ENCODE measurements at regions of chr5 and their contacts with region 1.

Region 1: GRCh38 chr5:40578501-40579451 is 100.9 kb upstream of the PTGER4 start:
- DNase-seq: peak; percentile 87
- H3K4me3 Mint-ChIP-seq: peak overlapping the region; percentile 66
- H3K27ac Mint-ChIP-seq: peak overlapping the region; percentile 92
- H3K4me1 Mint-ChIP-seq: peaks cover 37% of the 10 kb centered on the region
- H3K27me3 Mint-ChIP-seq: no peaks in the 10 kb centered on the region

Region 2: GRCh38 chr5:40333459-40334244 is 245.1 kb before region 1 on chr5:
- CTCF ChIA-PET with region 1: no interaction called
- intact Hi-C with region 1: loop called (anchors 1 kb)
- DNase-seq: peak; percentile 63
- H3K4me3 Mint-ChIP-seq: no peak overlapping the region
- H3K27ac Mint-ChIP-seq: peak overlapping the region; percentile 41
- H3K4me1 Mint-ChIP-seq: peaks cover 15% of the 10 kb centered on the region
- H3K27me3 Mint-ChIP-seq: peaks cover 3% of the 10 kb centered on the region

Region 3: GRCh38 chr5:40437452-40437861 is 141.3 kb before region 1 on chr5:
- CTCF ChIA-PET with region 1: no interaction called
- intact Hi-C with region 1: loop called (anchors 1 kb)
- DNase-seq: peak; percentile 19
- H3K4me3 Mint-ChIP-seq: no peak overlapping the region
- H3K27ac Mint-ChIP-seq: peak overlapping the region; percentile 94
- H3K4me1 Mint-ChIP-seq: peaks cover 81% of the 10 kb centered on the region
- H3K27me3 Mint-ChIP-seq: no peaks in the 10 kb centered on the region

Region 4: GRCh38 chr5:40557501-40557900 is 21.3 kb before region 1 on chr5:
- CTCF ChIA-PET with region 1: interaction called, 3 read pairs
- intact Hi-C with region 1: loop called (anchors 1 kb)
- DNase-seq: no peak
- H3K4me3 Mint-ChIP-seq: no peak overlapping the region
- H3K27ac Mint-ChIP-seq: no peak overlapping the region
- H3K4me1 Mint-ChIP-seq: peaks cover 37% of the 10 kb centered on the region
- H3K27me3 Mint-ChIP-seq: no peaks in the 10 kb centered on the region

Region 5: GRCh38 chr5:40653221-40654022 is 74.6 kb after region 1 on chr5:
- CTCF ChIA-PET with region 1: no interaction called
- intact Hi-C with region 1: loop called (anchors 1 kb)
- DNase-seq: peak; percentile 22
- H3K4me3 Mint-ChIP-seq: peak overlapping the region; percentile 54
- H3K27ac Mint-ChIP-seq: peak overlapping the region; percentile 67
- H3K4me1 Mint-ChIP-seq: peaks cover 57% of the 10 kb centered on the region
- H3K27me3 Mint-ChIP-seq: no peaks in the 10 kb centered on the region

Region 6: GRCh38 chr5:40736103-40736875 is 157.5 kb after region 1 on chr5:
- CTCF ChIA-PET with region 1: no interaction called
- intact Hi-C with region 1: loop called (anchors 1 kb)
- DNase-seq: no peak
- H3K4me3 Mint-ChIP-seq: no peak overlapping the region
- H3K27ac Mint-ChIP-seq: no peak overlapping the region
- H3K4me1 Mint-ChIP-seq: peaks cover 26% of the 10 kb centered on the region
- H3K27me3 Mint-ChIP-seq: no peaks in the 10 kb centered on the region

Region 7: GRCh38 chr5:40781843-40782409 is 203.2 kb after region 1 on chr5:
- CTCF ChIA-PET with region 1: no interaction called
- intact Hi-C with region 1: no loop called
- DNase-seq: no peak
- H3K4me3 Mint-ChIP-seq: no peak overlapping the region
- H3K27ac Mint-ChIP-seq: no peak overlapping the region
- H3K4me1 Mint-ChIP-seq: peaks cover 36% of the 10 kb centered on the region
- H3K27me3 Mint-ChIP-seq: no peaks in the 10 kb centered on the region